Breast epithelium (tissue), 4 donors: ENCODE measurements at regions of chr12 and their contacts with region 1.

Region 1: DNA sequence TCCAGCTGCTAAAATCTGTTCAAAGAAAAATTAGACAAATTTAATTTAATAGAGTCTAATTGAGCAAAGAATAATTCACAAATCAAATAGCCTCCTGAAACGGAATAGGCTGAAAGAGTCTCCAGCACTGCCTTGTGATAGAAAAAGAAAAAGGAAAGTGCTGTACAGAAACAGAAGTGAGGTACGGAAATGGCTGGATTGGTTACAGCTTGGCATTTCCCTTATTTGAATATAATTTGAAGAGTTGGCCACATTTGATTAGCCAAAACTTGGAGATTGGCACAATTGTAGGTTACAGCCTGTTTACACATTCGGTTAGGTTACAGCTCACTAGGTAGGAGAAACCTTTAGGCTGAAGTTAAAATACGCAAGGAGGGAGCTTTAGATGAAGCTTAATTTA is 24.8 kb upstream of the PCED1B start:
- DNase-seq: no peak
- H3K4me3 ChIP-seq: no peak overlapping the region
- H3K27ac ChIP-seq: no peak overlapping the region
- H3K4me1 ChIP-seq: no peaks in the 10 kb centered on the region
- H3K27me3 ChIP-seq: no peaks in the 10 kb centered on the region
- CTCF ChIP-seq: no peak
- POLR2A ChIP-seq: no peak

Region 2: DNA sequence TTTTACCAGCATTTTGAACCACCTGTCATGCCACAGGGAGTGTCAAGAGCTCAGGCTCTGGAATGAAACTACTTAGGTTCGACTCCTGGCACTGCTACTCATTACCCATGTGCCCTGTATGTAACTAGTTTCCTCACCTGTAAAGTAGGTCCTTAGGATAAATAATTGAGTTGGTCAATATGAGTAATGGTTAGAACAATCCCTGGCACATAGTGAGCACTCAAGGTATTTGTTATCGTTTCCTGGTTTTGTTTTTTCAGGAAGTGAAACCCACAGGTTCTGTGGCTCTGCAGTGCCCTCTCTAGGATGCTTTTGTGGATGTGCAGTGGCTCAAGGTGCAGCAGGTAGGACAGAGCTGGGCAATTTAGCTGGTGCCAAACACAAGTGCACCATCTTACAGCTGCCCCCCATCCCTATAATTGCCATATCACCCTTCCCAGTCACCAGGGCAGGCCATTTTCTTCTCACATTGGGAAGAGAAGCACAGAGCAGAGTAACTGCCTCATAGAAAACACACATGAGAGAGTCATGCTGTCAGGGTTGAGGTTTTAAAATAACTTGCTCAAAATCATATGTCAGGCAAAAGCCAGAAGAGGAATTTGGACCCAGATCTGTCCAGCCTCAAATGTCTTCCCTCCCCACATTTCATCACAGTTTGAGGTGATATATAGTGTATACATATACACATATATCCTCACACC is 353.7 kb after region 1 on chr12:
- intact Hi-C with region 1: loop called (anchors 10 kb)
- DNase-seq: no peak
- H3K4me3 ChIP-seq: no peak overlapping the region
- H3K27ac ChIP-seq: no peak overlapping the region
- H3K4me1 ChIP-seq: no peaks in the 10 kb centered on the region
- H3K27me3 ChIP-seq: no peaks in the 10 kb centered on the region
- CTCF ChIP-seq: peak in 1 of 3 donors; percentile 18
- POLR2A ChIP-seq: no peak

Region 3: DNA sequence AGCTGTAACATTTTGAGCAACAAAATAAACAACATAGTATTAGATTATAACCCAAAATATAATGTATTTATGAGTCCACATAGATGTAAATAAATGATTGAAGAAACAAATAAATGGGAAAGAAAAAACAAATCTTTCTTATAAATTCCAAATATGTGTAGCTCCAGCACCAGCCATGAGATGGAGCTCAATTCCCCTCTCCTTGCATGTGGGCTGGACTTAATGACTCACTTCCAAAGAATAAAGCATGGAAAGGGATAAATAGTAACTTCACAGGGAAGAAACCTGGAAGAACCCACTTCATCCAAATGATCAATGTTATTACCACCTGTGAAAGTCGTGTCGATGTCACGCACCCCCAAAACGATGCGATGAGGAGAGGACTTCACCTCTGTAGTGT is 492.4 kb after region 1 on chr12:
- intact Hi-C with region 1: no loop called
- DNase-seq: no peak
- H3K4me3 ChIP-seq: no peak overlapping the region
- H3K27ac ChIP-seq: no peak overlapping the region
- H3K4me1 ChIP-seq: no peaks in the 10 kb centered on the region
- H3K27me3 ChIP-seq: no peaks in the 10 kb centered on the region
- CTCF ChIP-seq: no peak
- POLR2A ChIP-seq: no peak